WTC11 (cell line): ENCODE measurements at regions of chr2 and their contacts with region 1.

Region 1: DNA sequence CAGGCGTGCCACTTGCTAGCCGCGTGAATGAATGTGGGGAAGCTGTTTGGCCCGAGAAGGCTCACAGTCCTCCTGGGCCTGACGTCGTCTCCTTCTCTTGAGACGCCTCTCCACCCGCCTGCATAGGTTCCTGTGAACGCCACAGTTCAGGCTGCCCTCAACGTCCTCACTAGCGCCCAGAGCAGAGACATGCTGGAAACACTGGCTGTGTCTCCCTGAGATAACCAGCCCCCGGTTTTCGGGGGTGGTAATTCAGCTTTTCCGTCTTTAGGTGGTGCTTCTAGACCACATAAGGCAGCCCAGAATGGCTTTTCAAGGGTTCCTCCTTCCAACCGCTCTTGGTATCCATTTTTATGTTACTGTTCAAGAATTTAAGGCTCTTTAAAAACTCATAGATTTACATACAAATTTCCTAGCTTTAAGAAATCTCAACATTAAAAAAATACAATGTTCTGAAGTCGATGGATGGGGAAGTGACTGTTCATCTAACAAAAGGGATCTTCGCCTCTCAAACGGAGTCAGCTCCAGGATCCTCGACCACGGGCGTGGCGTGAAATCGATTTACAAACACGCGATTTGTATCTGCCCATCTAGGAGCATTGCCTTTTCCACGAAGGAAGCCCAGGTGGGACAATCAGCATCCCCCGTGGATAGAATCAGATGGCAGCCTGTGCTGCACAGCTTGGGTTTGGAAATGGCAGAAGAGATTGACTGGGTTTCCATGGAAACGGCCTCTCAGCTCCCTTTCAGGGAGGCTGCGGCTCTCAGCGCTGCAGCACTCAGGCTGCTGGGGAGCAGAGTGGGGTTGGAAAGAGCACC is 110.6 kb upstream of the PXDN start:
- DNase-seq: peak; percentile 66
- ATAC-seq: peak; percentile 94
- H3K4me3 Mint-ChIP-seq: peak overlapping the region; percentile 73
- H3K27ac Mint-ChIP-seq: no peak overlapping the region
- H3K4me1 Mint-ChIP-seq: peaks cover 21% of the 10 kb centered on the region
- H3K27me3 Mint-ChIP-seq: peaks cover 4% of the 10 kb centered on the region; the same call in 1 of the 2 replicates
- CTCF ChIP-seq: no peak

Region 2: GRCh38 chr2:1804351-1804771 is 50.6 kb before region 1 on chr2:
- CTCF ChIA-PET with region 1: no interaction called
- POLR2A ChIA-PET with region 1: no interaction called
- DNase-seq: no peak
- ATAC-seq: no peak
- H3K4me3 Mint-ChIP-seq: no peak overlapping the region
- H3K27ac Mint-ChIP-seq: no peak overlapping the region
- H3K4me1 Mint-ChIP-seq: no peaks in the 10 kb centered on the region
- H3K27me3 Mint-ChIP-seq: no peaks in the 10 kb centered on the region; the same call in 1 of the 2 replicates
- CTCF ChIP-seq: no peak

Region 3: DNA sequence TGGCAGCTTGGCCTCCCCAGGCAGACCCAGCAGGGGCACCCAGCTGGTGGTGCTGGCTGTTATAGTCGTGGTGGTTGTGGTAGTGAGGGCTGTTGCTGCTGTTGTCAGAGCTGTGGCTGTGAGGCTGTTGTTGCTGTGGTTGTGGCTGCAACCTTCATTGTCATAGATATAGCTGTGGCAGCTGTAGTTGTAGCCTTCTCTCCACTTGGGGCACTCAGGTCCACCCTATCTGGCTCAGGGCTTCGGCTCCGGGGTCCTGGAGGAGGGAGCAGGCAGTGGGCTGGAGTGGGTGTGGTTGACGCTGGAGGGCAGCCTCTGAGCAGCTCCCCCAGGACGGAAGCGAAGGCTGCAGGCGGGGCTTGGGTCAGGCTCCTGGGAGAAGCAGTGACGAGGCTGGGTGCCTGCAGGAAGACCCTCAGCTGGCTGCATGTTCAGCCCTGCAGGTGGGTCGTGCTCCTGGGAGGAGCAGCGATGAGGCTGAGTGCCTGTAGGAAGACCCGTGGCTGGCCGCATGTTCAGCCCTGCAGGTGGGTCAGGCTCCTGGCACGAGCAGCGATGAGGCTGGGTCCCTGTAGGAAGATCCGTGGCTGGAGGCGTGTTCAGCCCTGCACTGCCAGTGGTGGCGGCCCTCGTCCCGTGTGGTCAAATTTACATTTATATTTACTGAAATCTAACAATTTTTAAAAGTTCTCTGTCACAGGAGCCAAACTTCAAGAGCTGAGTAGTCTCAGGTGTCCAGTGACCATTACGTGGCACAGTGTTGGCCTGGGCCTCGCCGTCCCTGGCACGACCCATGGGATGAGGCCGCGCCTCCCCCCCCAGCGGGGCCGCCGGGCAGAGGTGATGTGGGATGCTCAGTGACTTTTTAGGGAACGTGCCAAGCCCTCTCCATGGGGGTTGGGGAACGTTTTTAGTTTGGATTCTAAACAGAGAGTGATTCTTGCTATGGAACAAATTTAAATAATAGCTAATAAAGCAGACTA is 31.5 kb before region 1 on chr2:
- CTCF ChIA-PET with region 1: interaction called, 11 read pairs
- POLR2A ChIA-PET with region 1: no interaction called
- DNase-seq: peak; percentile 65
- ATAC-seq: peak; percentile 98
- H3K4me3 Mint-ChIP-seq: no peak overlapping the region
- H3K27ac Mint-ChIP-seq: no peak overlapping the region; the same call in 1 of the 2 replicates
- H3K4me1 Mint-ChIP-seq: peaks cover 9% of the 10 kb centered on the region
- H3K27me3 Mint-ChIP-seq: no peaks in the 10 kb centered on the region
- CTCF ChIP-seq: no peak

Region 4: DNA sequence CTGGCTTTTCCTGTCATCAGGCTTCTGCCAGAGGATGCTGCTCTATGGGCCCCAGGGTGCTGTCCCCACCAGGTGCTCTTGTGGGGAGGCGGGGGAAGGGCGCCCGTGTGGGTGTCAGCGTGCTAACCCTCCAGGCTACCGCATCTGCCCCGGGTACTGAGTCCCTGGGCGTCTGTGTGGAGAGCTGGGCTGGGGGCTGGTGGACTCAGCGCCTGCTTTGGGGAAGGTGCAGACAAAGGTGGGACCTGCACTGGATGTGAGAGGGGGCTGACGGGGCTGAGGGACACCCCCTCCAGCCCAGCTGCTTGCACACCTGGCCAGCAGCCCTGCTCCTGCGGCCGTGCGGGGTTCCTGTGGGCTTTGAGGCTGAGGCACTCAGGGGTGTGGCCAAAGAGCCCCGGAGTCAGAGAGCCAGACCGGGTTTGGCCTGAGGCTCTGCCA is 10.1 kb after region 1 on chr2:
- CTCF ChIA-PET with region 1: interaction called, 14 read pairs
- POLR2A ChIA-PET with region 1: interaction called, 5 read pairs
- DNase-seq: peak; percentile 43
- ATAC-seq: peak; percentile 82
- H3K4me3 Mint-ChIP-seq: no peak overlapping the region
- H3K27ac Mint-ChIP-seq: no peak overlapping the region
- H3K4me1 Mint-ChIP-seq: peaks cover 18% of the 10 kb centered on the region
- H3K27me3 Mint-ChIP-seq: peaks cover 22% of the 10 kb centered on the region
- CTCF ChIP-seq: no peak

Region 5: DNA sequence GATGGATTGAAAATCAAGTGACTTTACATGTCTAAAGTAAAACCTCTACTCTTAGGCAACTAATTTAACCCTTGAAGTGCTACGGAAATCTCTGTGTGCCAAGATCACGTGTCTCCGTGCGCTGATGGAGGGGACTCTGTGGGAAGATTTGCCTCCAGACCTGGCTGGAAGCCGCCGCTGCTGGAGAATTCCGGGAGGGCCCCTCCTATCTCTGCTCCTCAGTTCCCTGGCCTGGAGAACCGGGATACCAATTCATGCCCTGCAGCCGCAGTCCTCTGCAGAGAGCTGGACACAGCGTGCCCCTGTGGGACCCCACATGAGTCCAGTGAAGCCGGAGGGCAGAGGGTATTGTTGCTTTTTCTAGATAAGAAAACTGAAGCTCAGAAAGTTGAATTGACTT is 16.2 kb after region 1 on chr2:
- CTCF ChIA-PET with region 1: interaction called, 14 read pairs
- POLR2A ChIA-PET with region 1: interaction called, 5 read pairs
- DNase-seq: no peak
- ATAC-seq: no peak
- H3K4me3 Mint-ChIP-seq: no peak overlapping the region
- H3K27ac Mint-ChIP-seq: no peak overlapping the region
- H3K4me1 Mint-ChIP-seq: peaks cover 9% of the 10 kb centered on the region
- H3K27me3 Mint-ChIP-seq: peaks cover 15% of the 10 kb centered on the region
- CTCF ChIP-seq: no peak

Region 6: DNA sequence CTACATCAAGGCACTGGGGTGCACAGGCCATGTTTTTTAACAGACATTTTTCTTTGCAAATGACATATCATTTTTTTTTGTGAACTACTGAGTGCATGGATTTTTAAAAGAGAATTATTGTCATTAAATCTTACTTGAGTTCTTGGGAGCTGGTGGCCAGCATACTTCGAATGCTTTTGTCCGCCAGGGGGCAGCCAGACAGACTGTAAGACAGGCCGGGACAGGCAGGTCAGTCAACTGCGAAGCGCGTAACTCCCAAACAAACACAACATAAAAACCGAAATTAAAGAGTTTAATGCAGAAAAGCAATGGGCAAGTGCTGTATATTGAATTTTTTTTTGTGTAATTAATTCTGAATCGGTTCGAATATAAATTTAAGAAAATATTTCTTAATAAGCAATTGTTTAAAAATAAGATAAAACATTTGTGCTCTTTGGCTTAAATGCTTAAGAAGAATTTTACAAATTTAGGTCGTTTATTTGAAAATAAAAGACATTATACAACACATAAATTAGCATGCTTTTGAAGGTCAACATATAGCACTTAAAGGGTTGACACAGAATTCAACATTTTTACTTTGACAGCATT is 31.6 kb after region 1 on chr2:
- CTCF ChIA-PET with region 1: interaction called, 11 read pairs
- POLR2A ChIA-PET with region 1: no interaction called
- DNase-seq: peak; percentile 83
- ATAC-seq: peak; percentile 61
- H3K4me3 Mint-ChIP-seq: no peak overlapping the region
- H3K27ac Mint-ChIP-seq: no peak overlapping the region
- H3K4me1 Mint-ChIP-seq: peaks cover 6% of the 10 kb centered on the region; the same call in 1 of the 2 replicates
- H3K27me3 Mint-ChIP-seq: no peaks in the 10 kb centered on the region
- CTCF ChIP-seq: peak; percentile 76